CD4-positive, alpha-beta memory T cell (primary cell): ENCODE measurements at regions of chr22 and their contacts with region 1.

Region 1: GRCh38 chr22:18077639-18078328 is at the start of gene PEX26:
- DNase-seq: peak; percentile 93 to 98 (median 95)
- H3K4me3 ChIP-seq: peak within 1 kb of the TSS; percentile 72 to 86
- H3K4me3 Mint-ChIP-seq: peak within 1 kb of the TSS; percentile 92 to 99 (median 97)
- H3K27ac ChIP-seq: peak within 1 kb of the TSS; percentile 72
- H3K27ac Mint-ChIP-seq: peak within 1 kb of the TSS; percentile 86 to 100 (median 98)
- H3K4me1 ChIP-seq: peaks cover 35% of the 10 kb centered on the region
- H3K4me1 Mint-ChIP-seq: peaks cover 37 to 59% (median 47%) of the 10 kb centered on the region in 4 donors
- H3K27me3 ChIP-seq: no peaks in the 10 kb centered on the region
- H3K27me3 Mint-ChIP-seq: no peaks in the 10 kb centered on the region
- total RNA-seq, gene PEX26: 39.1 to 39.6 TPM

Region 2: GRCh38 chr22:17638432-17639246 is 439.1 kb before region 1 on chr22 and contains the start of gene BCL2L13:
- CTCF ChIA-PET with region 1: interaction called, 3 read pairs
- POLR2A ChIA-PET with region 1: interaction called, 6 read pairs
- intact Hi-C with region 1: loop called (anchors 2 kb)
- DNase-seq: peak; percentile 86 to 91 (median 89)
- H3K4me3 ChIP-seq: peak within 1 kb of the TSS; percentile 71 to 87
- H3K4me3 Mint-ChIP-seq: peak within 1 kb of the TSS; percentile 89 to 93 (median 92)
- H3K27ac ChIP-seq: peak within 1 kb of the TSS; percentile 98
- H3K27ac Mint-ChIP-seq: peak within 1 kb of the TSS; percentile 94 to 99 (median 98)
- H3K4me1 ChIP-seq: peaks cover 23% of the 10 kb centered on the region
- H3K4me1 Mint-ChIP-seq: peaks cover 17 to 45% (median 23%) of the 10 kb centered on the region in 4 donors
- H3K27me3 ChIP-seq: no peaks in the 10 kb centered on the region
- H3K27me3 Mint-ChIP-seq: no peaks in the 10 kb centered on the region
- total RNA-seq, gene BCL2L13: 28.3 to 32.6 TPM

Region 3: DNA sequence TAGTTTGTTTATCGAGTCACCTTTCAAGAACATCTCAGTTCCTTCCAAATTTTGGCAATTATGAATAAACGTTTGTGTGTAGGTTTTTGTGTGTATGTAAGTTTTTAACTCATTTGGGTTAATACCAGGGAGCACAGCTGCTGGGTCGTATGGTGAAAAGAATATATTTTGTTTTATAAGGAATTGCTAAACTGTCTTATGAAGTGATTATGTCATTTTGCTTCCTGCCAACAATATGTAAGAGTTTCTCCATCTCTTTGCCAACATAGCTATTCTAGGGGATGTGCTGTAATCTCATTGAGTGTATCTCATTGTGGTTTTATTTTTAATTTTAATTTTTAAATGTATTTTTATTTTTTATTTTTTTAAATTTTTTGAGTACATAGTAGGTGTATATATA is 411.9 kb before region 1 on chr22:
- CTCF ChIA-PET with region 1: no interaction called
- POLR2A ChIA-PET with region 1: no interaction called
- intact Hi-C with region 1: no loop called
- DNase-seq: no peak
- H3K4me3 ChIP-seq: no peak overlapping the region
- H3K4me3 Mint-ChIP-seq: no peak overlapping the region
- H3K27ac ChIP-seq: no peak overlapping the region
- H3K27ac Mint-ChIP-seq: no peak overlapping the region
- H3K4me1 ChIP-seq: no peaks in the 10 kb centered on the region
- H3K4me1 Mint-ChIP-seq: peaks cover 0 to 12% (median 4%) of the 10 kb centered on the region in 4 donors
- H3K27me3 ChIP-seq: no peaks in the 10 kb centered on the region
- H3K27me3 Mint-ChIP-seq: no peaks in the 10 kb centered on the region

Region 4: GRCh38 chr22:17773606-17774205 is 304.1 kb before region 1 on chr22:
- CTCF ChIA-PET with region 1: no interaction called
- POLR2A ChIA-PET with region 1: interaction called, 7 read pairs
- intact Hi-C with region 1: loop called (anchors 1 kb)
- DNase-seq: peak; percentile 57 to 77 (median 60)
- H3K4me3 ChIP-seq: peak overlapping the region; percentile 51 to 61
- H3K4me3 Mint-ChIP-seq: peak overlapping the region; percentile 87 to 96 (median 90)
- H3K27ac ChIP-seq: peak overlapping the region; percentile 57
- H3K27ac Mint-ChIP-seq: peak overlapping the region; percentile 63 to 95 (median 88)
- H3K4me1 ChIP-seq: peaks cover 70% of the 10 kb centered on the region
- H3K4me1 Mint-ChIP-seq: peaks cover 40 to 88% (median 65%) of the 10 kb centered on the region in 4 donors
- H3K27me3 ChIP-seq: no peaks in the 10 kb centered on the region
- H3K27me3 Mint-ChIP-seq: no peaks in the 10 kb centered on the region

Region 5: DNA sequence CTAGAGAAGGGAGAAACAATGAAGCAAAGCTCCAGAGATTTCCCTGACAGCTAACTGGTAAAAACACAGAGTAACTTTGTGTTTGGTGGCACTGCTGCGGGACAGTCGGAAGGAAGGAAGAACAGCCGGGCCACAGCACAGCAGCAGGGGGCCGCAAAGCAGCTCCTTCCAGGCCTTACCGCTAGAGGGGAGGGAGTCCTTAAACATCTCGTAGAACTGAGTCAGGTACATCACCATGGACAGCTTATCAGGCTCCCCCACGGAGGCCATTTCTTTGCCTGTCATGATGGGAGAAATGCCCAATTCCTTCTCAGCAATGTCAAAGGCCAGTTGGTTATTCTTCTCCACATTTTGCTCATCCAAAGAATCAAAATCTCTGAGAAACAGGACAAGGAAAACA is 188.9 kb before region 1 on chr22:
- CTCF ChIA-PET with region 1: interaction called, 11 read pairs
- POLR2A ChIA-PET with region 1: no interaction called
- intact Hi-C with region 1: no loop called
- DNase-seq: no peak
- H3K4me3 ChIP-seq: no peak overlapping the region
- H3K4me3 Mint-ChIP-seq: no peak overlapping the region
- H3K27ac ChIP-seq: no peak overlapping the region
- H3K27ac Mint-ChIP-seq: no peak overlapping the region
- H3K4me1 ChIP-seq: no peaks in the 10 kb centered on the region
- H3K4me1 Mint-ChIP-seq: peaks cover 0 to 1% (median 0%) of the 10 kb centered on the region in 4 donors
- H3K27me3 ChIP-seq: no peaks in the 10 kb centered on the region
- H3K27me3 Mint-ChIP-seq: no peaks in the 10 kb centered on the region

Region 6: DNA sequence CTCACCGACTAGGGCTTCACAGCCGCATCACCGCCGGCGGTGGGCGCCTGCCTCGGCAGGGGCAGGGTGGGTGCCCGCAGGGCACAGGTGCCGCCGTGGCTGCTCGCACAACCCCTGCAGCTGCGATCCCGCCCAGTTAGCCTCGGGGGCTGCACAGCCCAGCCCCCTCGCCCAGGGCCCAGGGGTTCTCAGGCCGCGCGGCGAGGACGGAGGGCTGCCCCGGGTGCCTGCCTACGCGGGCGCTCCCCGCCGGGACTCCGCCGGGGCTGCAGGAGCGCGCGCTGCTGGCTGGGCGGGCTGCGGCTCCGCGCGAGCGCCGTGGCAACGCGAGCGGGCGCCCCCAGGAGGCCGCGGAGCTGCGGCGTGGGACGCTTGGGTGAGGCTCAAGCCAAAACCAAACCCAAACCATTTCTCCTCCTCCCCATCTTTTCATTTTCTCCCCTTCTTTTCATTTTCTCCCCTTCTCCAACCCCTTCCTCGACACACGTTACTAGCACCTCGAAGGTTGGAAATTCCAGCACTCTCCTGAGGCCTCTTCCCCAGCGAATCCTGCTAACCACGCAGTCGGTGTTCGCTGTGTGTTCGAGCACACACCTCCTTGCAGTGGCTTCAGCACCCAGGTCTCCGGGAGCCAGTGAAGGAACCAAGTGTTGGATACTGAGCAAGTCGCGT is 53.4 kb before region 1 on chr22 and contains the start of gene MICAL3:
- CTCF ChIA-PET with region 1: interaction called, 4 read pairs
- POLR2A ChIA-PET with region 1: no interaction called
- intact Hi-C with region 1: loop called (anchors 2 kb)
- DNase-seq: peak; percentile 46 to 68 (median 64)
- H3K4me3 ChIP-seq: peak within 1 kb of the TSS; percentile 40 to 61
- H3K4me3 Mint-ChIP-seq: peak within 1 kb of the TSS; percentile 88 to 97 (median 94)
- H3K27ac ChIP-seq: no peak within 1 kb of the TSS
- H3K27ac Mint-ChIP-seq: peak within 1 kb of the TSS in 3 of 7 donors; percentile 45 to 86 (median 51)
- H3K4me1 ChIP-seq: peaks cover 15% of the 10 kb centered on the region
- H3K4me1 Mint-ChIP-seq: peaks cover 5 to 19% (median 10%) of the 10 kb centered on the region in 4 donors
- H3K27me3 ChIP-seq: peaks cover 17% of the 10 kb centered on the region
- H3K27me3 Mint-ChIP-seq: peaks cover 22 to 28% of the 10 kb centered on the region in 2 donors
- total RNA-seq, gene MICAL3: 25.9 to 28.9 TPM

Region 7: GRCh38 chr22:18110194-18110953 is 32.6 kb after region 1 on chr22 and contains the start of gene TUBA8:
- CTCF ChIA-PET with region 1: no interaction called
- POLR2A ChIA-PET with region 1: no interaction called
- intact Hi-C with region 1: loop called (anchors 5 kb)
- DNase-seq: peak in 1 of 5 donors; percentile 6
- H3K4me3 ChIP-seq: peak within 1 kb of the TSS; percentile 4 to 32
- H3K4me3 Mint-ChIP-seq: peak within 1 kb of the TSS; percentile 62 to 80 (median 68)
- H3K27ac ChIP-seq: no peak within 1 kb of the TSS
- H3K27ac Mint-ChIP-seq: no peak within 1 kb of the TSS
- H3K4me1 ChIP-seq: peaks cover 20% of the 10 kb centered on the region
- H3K4me1 Mint-ChIP-seq: peaks cover 17 to 39% (median 21%) of the 10 kb centered on the region in 4 donors
- H3K27me3 ChIP-seq: no peaks in the 10 kb centered on the region
- H3K27me3 Mint-ChIP-seq: peaks cover 19 to 24% of the 10 kb centered on the region in 2 donors
- total RNA-seq, gene TUBA8: 1.9 to 2.7 TPM